Gastrocnemius medialis (tissue), 4 donors: ENCODE measurements at regions of chr3 and their contacts with region 1.

Region 1: DNA sequence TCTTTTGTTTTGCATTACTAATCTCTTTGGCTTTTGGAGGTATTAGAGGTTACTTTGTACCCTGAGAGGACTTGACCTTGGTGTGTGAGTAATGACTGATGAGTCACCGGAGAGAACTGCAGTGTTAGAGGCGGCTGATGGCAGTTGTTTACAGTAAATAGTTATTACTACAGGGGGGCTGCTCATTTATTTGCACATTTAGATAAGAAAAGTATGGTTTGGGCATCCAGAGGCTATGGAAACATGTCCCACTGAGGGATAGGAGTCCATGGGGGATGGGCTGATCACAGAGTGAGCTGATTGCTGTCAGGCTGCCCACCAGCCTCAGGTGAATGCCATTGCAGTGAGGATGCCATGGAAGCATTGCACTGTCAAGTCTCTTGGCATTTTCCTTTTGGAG is 17.3 kb upstream of the STAC start:
- DNase-seq: no peak
- ATAC-seq: no peak
- H3K4me3 ChIP-seq: no peak overlapping the region
- H3K27ac ChIP-seq: no peak overlapping the region
- H3K4me1 ChIP-seq: no peaks in the 10 kb centered on the region
- H3K27me3 ChIP-seq: no peaks in the 10 kb centered on the region
- CTCF ChIP-seq: no peak
- POLR2A ChIP-seq: no peak

Region 2: GRCh38 chr3:36013425-36013824 is 349.5 kb before region 1 on chr3:
- in situ Hi-C with region 1: no loop called
- intact Hi-C with region 1: loop called (anchors 5 kb)
- DNase-seq: no peak
- ATAC-seq: no peak
- H3K4me3 ChIP-seq: no peak overlapping the region
- H3K27ac ChIP-seq: no peak overlapping the region
- H3K4me1 ChIP-seq: no peaks in the 10 kb centered on the region
- H3K27me3 ChIP-seq: no peaks in the 10 kb centered on the region
- CTCF ChIP-seq: no peak
- POLR2A ChIP-seq: no peak